ENCODE measurements at regions of chr7 and their contacts with region 1.

Region 1: GRCh38 chr7:2451171-2452073 is 24.8 kb downstream of the GRIFIN start:
- DNase-seq: peak; percentile 89
- ATAC-seq: peak; percentile 95
- H3K4me3 Mint-ChIP-seq: no peak overlapping the region
- H3K27ac Mint-ChIP-seq: peak overlapping the region; percentile 70; the same call in 1 of the 2 replicates
- H3K4me1 Mint-ChIP-seq: peaks cover 4% of the 10 kb centered on the region
- H3K27me3 Mint-ChIP-seq: no peaks in the 10 kb centered on the region
- CTCF ChIP-seq: peak; percentile 81

Region 2: GRCh38 chr7:2307611-2308107 is 143.8 kb before region 1 on chr7:
- CTCF ChIA-PET with region 1: no interaction called
- POLR2A ChIA-PET with region 1: interaction called, 14 read pairs
- DNase-seq: no peak
- ATAC-seq: no peak
- H3K4me3 Mint-ChIP-seq: no peak overlapping the region
- H3K27ac Mint-ChIP-seq: peak overlapping the region; percentile 67
- H3K4me1 Mint-ChIP-seq: peaks cover 17% of the 10 kb centered on the region
- H3K27me3 Mint-ChIP-seq: no peaks in the 10 kb centered on the region
- CTCF ChIP-seq: no peak

Region 3: GRCh38 chr7:2477447-2478398 is 26.3 kb after region 1 on chr7:
- CTCF ChIA-PET with region 1: interaction called, 288 read pairs
- POLR2A ChIA-PET with region 1: no interaction called
- DNase-seq: peak; percentile 74
- ATAC-seq: peak; percentile 86
- H3K4me3 Mint-ChIP-seq: no peak overlapping the region
- H3K27ac Mint-ChIP-seq: no peak overlapping the region
- H3K4me1 Mint-ChIP-seq: peaks cover 16% of the 10 kb centered on the region
- H3K27me3 Mint-ChIP-seq: no peaks in the 10 kb centered on the region
- CTCF ChIP-seq: peak; percentile 45

Region 4: DNA sequence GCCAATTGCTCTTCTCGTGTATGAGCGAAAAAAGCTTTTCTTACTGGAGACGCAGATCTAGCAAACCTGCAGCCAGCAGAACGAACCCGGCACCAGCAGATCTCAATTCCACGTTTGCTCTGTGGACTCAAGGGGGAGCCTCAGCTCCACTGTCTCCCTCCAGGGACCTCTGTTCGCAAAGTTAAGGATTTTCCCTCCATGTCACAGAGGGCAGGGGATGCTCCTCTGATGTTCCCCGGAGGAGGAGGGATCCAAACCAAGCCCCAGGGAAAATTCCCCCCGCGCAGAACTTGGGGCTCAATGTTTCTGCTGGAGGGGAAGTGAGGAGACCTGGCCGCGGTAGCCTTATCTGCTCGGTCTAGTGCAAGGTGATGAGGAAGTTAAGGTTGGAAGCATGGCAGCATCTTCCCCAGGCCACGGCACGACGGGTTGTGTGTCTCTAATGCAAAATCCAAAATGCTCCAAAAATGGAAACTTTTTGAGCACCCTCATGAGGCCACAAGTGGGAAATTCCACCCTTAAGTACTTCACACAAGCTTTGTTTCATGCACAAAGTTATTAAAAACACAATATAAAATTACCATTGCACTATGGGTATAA is 116.4 kb after region 1 on chr7:
- CTCF ChIA-PET with region 1: interaction called, 16 read pairs
- POLR2A ChIA-PET with region 1: no interaction called
- DNase-seq: peak; percentile 54
- ATAC-seq: peak; percentile 87
- H3K4me3 Mint-ChIP-seq: no peak overlapping the region
- H3K27ac Mint-ChIP-seq: no peak overlapping the region
- H3K4me1 Mint-ChIP-seq: peaks cover 9% of the 10 kb centered on the region
- H3K27me3 Mint-ChIP-seq: no peaks in the 10 kb centered on the region
- CTCF ChIP-seq: no peak

Region 5: GRCh38 chr7:2608921-2609411 is 157.5 kb after region 1 on chr7:
- CTCF ChIA-PET with region 1: interaction called, 18 read pairs
- POLR2A ChIA-PET with region 1: interaction called, 3 read pairs
- DNase-seq: peak; percentile 73
- ATAC-seq: peak; percentile 63
- H3K4me3 Mint-ChIP-seq: no peak overlapping the region
- H3K27ac Mint-ChIP-seq: peak overlapping the region; percentile 22; the same call in 1 of the 2 replicates
- H3K4me1 Mint-ChIP-seq: peaks cover 20% of the 10 kb centered on the region
- H3K27me3 Mint-ChIP-seq: no peaks in the 10 kb centered on the region
- CTCF ChIP-seq: no peak

Region 6: GRCh38 chr7:2670720-2671391 is 219.4 kb after region 1 on chr7:
- CTCF ChIA-PET with region 1: interaction called, 12 read pairs
- POLR2A ChIA-PET with region 1: no interaction called
- DNase-seq: peak; percentile 85
- ATAC-seq: peak; percentile 94
- H3K4me3 Mint-ChIP-seq: no peak overlapping the region
- H3K27ac Mint-ChIP-seq: no peak overlapping the region
- H3K4me1 Mint-ChIP-seq: no peaks in the 10 kb centered on the region
- H3K27me3 Mint-ChIP-seq: peaks cover 11% of the 10 kb centered on the region
- CTCF ChIP-seq: peak; percentile 77

Region 7: GRCh38 chr7:2698581-2699288 is 247.3 kb after region 1 on chr7:
- CTCF ChIA-PET with region 1: interaction called, 11 read pairs
- POLR2A ChIA-PET with region 1: no interaction called
- DNase-seq: no peak
- ATAC-seq: no peak
- H3K4me3 Mint-ChIP-seq: no peak overlapping the region
- H3K27ac Mint-ChIP-seq: no peak overlapping the region; the same call in 1 of the 2 replicates
- H3K4me1 Mint-ChIP-seq: 0 out of 2 replicates have a peak, but pooled peaks cover 3% of the 10 kb centered on the region
- H3K27me3 Mint-ChIP-seq: no peaks in the 10 kb centered on the region
- CTCF ChIP-seq: no peak

Measured in WTC11 (cell line).